Activated CD8-positive, alpha-beta T cell treated with anti-CD3 and anti-CD28 coated beads for 36 hours (primary cell): ENCODE measurements at regions of chr7 and their contacts with region 1.

Region 1: DNA sequence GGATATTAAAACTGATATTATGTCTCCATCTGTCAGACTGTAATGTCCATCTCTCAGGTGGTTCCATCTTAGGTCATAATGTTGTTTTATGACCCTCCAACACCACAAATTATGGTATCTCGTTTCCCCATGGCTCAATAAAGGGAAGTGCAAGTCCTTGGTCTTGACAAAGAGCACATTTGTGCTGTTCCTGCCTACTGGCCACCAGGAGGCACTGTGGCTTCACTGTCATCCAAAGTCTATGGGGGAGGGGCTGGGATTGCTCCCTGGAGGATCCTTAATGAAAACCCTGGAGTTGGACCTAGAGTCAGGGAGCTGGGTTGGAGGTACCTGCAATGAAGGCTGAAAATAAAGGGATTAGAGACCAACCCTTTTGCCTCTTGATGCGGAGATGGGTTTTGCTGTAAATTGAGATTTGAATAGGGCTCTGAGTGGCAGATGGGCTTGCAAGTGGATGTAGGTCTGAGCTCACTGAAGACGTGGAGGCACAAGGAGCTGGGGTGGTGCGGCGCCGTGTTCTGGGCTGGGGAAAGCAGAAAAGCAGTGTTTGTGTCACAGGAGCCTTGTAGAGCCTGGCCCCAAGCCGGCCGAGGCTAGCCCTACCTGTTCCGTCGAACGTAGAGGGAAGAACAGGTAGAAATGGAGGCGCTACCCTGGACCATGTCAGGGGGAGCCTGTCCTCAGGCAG is 180.5 kb upstream of the PRSS58 start:
- DNase-seq: peak; percentile 39
- ATAC-seq: peak; percentile 60
- H3K4me3 Mint-ChIP-seq: no peak overlapping the region
- H3K27ac Mint-ChIP-seq: no peak overlapping the region
- H3K4me1 Mint-ChIP-seq: peaks cover 51% of the 10 kb centered on the region
- H3K27me3 Mint-ChIP-seq: no peaks in the 10 kb centered on the region
- CTCF ChIP-seq: peak; percentile 65

Region 2: GRCh38 chr7:142412551-142413193 is 25.7 kb before region 1 on chr7:
- CTCF ChIA-PET with region 1: interaction called, 13 read pairs
- POLR2A ChIA-PET with region 1: no interaction called
- intact Hi-C with region 1: no loop called
- DNase-seq: peak; percentile 58
- ATAC-seq: peak; percentile 84
- H3K4me3 Mint-ChIP-seq: no peak overlapping the region
- H3K27ac Mint-ChIP-seq: peak overlapping the region; percentile 12
- H3K4me1 Mint-ChIP-seq: peaks cover 6% of the 10 kb centered on the region
- H3K27me3 Mint-ChIP-seq: no peaks in the 10 kb centered on the region
- CTCF ChIP-seq: peak; percentile 76

Region 3: DNA sequence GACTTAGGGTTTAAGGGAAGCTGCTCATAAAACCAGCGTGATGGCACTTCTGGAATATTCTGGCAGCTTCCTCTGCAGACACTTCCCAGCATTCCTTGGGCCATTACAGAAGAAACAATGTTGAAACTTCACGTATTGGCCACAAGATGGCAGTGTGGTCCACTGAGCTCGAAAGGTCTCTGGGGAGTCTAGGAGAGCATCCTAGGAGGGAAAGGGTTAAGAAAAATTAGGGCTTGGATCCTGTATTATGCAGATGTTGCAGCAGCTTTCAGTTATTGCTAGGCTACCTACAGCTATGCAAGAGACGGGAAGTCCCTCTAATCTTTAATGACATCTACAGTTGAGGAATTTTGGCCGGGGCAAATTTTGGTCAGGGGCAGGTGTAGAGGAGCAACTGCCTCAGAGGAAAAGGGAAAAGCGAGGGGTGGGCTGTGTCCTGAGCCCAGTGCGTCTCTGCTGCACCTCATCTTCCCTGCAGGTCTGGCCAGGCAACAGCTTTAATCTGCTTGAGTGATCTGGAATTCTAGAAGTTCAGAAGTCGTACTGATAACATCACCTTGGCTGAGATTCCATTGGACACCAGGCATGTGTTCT is 40.2 kb after region 1 on chr7:
- CTCF ChIA-PET with region 1: interaction called, 9 read pairs
- POLR2A ChIA-PET with region 1: no interaction called
- intact Hi-C with region 1: loop called (anchors 2 kb)
- DNase-seq: peak; percentile 41
- ATAC-seq: peak; percentile 50
- H3K4me3 Mint-ChIP-seq: no peak overlapping the region
- H3K27ac Mint-ChIP-seq: peak overlapping the region; percentile 25
- H3K4me1 Mint-ChIP-seq: peaks cover 77% of the 10 kb centered on the region
- H3K27me3 Mint-ChIP-seq: no peaks in the 10 kb centered on the region
- CTCF ChIP-seq: peak; percentile 67